ENCODE measurements at regions of chr1 and their contacts with region 1.

Region 1: GRCh38 chr1:159089184-159089791 is 12.7 kb upstream of the AIM2 start:
- DNase-seq: no peak
- H3K4me3 ChIP-seq: no peak overlapping the region
- H3K27ac ChIP-seq: no peak overlapping the region
- H3K4me1 ChIP-seq: peaks cover 35% of the 10 kb centered on the region
- H3K27me3 ChIP-seq: peaks cover 0 to 2% of the 10 kb centered on the region in 2 experiments
- CTCF ChIP-seq: peak; percentile 19 to 32
- POLR2A ChIP-seq: no peak

Region 2: DNA sequence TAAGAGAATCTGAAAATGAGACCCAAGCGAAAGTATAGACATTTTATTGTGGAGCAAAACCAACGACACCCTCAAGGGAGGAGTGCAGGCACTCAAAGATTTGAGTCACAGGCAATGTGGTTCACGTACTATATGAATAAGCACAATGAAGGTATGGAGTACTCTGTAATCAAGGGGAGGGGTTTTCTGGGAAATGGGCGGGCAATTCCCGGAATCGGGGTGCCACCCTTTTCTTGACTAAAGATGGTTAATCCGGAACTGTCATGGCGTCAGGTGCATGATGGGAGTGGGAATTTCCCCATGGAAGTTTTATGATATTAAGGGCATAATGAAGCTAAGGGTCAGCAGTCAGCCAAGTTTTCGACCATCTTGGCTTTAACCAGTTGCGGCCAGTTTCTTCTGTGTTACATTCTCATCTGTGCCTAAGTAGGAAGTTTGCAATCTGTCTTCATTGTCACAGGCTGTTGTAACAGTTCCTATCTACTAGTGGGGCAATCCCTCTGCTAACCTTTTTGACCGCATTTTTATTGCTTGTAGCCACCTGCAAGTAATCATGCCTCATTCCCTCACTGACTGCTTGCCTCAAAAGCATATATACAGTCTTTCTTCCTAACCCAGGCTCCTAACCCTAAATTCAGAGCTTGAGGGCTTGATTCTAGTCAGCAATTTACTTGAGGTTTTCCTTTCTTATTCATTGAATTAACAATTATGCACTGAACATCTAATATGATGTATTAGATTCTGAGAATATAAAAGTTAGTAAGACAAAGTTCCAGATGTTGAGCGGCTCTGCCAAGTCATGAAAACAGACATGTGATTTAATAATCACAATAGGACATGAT is 11.9 kb before region 1 on chr1:
- CTCF ChIA-PET with region 1: interaction called, 14 read pairs
- POLR2A ChIA-PET with region 1: no interaction called
- dilution Hi-C with region 1: no loop called
- intact Hi-C with region 1: no loop called
- DNase-seq: no peak
- H3K4me3 ChIP-seq: no peak overlapping the region
- H3K27ac ChIP-seq: no peak overlapping the region
- H3K4me1 ChIP-seq: no peaks in the 10 kb centered on the region
- H3K27me3 ChIP-seq: peaks cover 20 to 43% of the 10 kb centered on the region in 2 experiments
- CTCF ChIP-seq: no peak
- POLR2A ChIP-seq: no peak